ENCODE measurements at regions of chr20 and their contacts with region 1.

Region 1: DNA sequence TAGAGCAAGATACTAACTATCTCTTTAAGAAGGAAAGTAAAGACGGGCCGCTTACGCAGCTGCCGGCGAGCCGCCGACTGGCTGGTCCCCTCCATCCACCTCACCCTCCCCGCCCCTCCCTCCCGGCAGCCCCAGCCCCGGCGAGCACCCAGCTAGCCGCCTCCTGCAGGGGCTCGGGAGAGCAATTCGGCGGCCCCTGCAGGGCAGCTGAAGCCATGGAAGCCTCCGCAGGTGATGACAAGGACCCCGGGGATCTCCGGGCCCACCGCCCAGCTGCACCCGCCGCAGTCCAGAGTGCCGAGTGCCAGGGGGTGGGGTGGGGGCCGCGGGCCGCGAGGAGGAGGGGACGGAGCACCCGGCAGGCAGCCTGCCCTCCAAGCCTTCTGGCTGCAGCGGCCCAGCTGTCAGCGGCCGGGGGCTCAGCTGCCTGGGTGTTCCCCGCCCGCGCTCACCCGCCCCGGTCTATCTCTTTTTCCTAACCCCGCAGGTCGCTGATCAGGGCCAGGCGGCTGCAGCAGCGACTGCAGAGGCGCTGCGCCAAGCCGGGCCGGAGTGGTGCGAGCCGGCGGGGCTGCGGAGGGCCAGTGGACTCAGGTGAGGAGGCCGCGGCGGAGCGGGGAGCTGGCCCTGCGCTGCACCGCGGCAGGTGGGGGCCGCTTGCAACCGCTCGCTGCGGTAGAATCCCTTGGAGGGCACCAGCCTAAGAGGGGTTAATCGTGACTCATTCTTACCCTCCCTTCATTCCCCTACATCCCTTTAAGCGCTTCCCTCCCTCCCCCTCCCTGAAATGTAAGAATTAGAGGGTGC is at the start of gene SNPH:
- DNase-seq: peak; percentile 86
- ATAC-seq: peak; percentile 91
- H3K4me3 Mint-ChIP-seq: peak within 1 kb of the TSS; percentile 78
- H3K27ac Mint-ChIP-seq: peak within 1 kb of the TSS; percentile 66
- H3K4me1 Mint-ChIP-seq: peaks cover 46% of the 10 kb centered on the region
- H3K27me3 Mint-ChIP-seq: no peaks in the 10 kb centered on the region
- total RNA-seq, gene SNPH: 2.5 to 2.9 TPM

Region 2: DNA sequence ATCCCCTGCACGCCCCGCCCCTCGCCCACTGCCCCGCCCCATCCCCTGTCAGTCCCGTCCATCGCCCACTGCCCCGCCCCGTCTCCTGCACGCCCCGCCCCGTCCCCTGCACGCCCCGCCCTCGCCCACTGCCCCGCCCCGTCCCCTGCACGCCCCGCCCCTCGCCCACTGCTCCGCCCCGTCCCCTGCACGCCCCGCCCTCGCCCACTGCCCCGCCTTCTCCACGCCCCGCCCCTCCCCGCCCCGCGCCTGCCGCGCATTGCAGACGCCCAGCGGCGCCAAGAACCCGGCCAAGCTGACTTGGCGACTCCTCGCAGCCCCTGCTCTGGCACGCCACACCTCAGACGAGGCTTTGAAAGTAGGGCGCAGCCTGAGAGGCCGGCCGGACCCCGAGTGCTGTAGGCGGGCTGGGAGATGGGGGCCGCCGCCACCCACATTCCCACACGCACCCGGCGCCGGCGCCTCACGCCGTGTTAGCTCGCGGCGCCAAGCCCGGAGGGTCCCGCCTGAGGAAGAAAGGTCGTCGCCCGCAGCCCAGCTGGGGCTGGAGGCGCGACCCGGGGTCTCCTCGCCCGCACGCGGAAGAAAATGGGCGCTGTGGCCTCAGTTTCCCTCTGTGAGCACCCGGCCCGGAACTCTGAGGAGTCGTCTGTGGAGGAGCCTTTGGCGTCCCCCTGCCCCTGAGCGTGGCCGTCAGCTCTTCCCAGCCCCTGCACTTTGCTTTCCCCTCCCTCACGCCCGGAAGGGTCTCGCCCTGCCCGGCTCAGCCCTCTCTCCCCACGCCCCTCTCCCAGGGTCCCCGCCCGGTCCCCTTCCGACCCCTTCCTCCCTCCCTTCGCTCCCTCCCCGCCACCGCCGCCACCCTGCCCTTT is 40.4 kb before region 1 on chr20 and contains the start of gene RAD21L1:
- CTCF ChIA-PET with region 1: interaction called, 3 read pairs
- POLR2A ChIA-PET with region 1: no interaction called
- intact Hi-C with region 1: loop called in 1 of 2 experiments (anchors 2 kb)
- DNase-seq: peak; percentile 94
- ATAC-seq: peak; percentile 85
- H3K4me3 Mint-ChIP-seq: peak within 1 kb of the TSS; percentile 75
- H3K27ac Mint-ChIP-seq: peak within 1 kb of the TSS; percentile 79
- H3K4me1 Mint-ChIP-seq: peaks cover 11% of the 10 kb centered on the region
- H3K27me3 Mint-ChIP-seq: peaks cover 9% of the 10 kb centered on the region
- total RNA-seq, gene RAD21L1: 0.32 TPM in 1 of 2 experiments, not detected in the other

Region 3: GRCh38 chr20:1301031-1301529 is 34.7 kb after region 1 on chr20:
- CTCF ChIA-PET with region 1: no interaction called
- POLR2A ChIA-PET with region 1: no interaction called
- intact Hi-C with region 1: loop called in 1 of 2 experiments (anchors 2 kb)
- DNase-seq: peak; percentile 76
- ATAC-seq: peak; percentile 96
- H3K4me3 Mint-ChIP-seq: peak overlapping the region; percentile 32
- H3K27ac Mint-ChIP-seq: peak overlapping the region; percentile 84
- H3K4me1 Mint-ChIP-seq: peaks cover 18% of the 10 kb centered on the region
- H3K27me3 Mint-ChIP-seq: no peaks in the 10 kb centered on the region

Region 4: GRCh38 chr20:1313236-1313964 is 47.0 kb after region 1 on chr20:
- CTCF ChIA-PET with region 1: no interaction called
- POLR2A ChIA-PET with region 1: no interaction called
- intact Hi-C with region 1: no loop called
- DNase-seq: peak; percentile 82
- ATAC-seq: peak; percentile 89
- H3K4me3 Mint-ChIP-seq: no peak overlapping the region
- H3K27ac Mint-ChIP-seq: no peak overlapping the region
- H3K4me1 Mint-ChIP-seq: peaks cover 3% of the 10 kb centered on the region
- H3K27me3 Mint-ChIP-seq: no peaks in the 10 kb centered on the region